ENCODE measurements at regions of chr5 and their contacts with region 1.

Region 1: GRCh38 chr5:62305715-62306322 is at the start of gene KIF2A:
- DNase-seq: peak; percentile 81 to 97 (median 91)
- ATAC-seq: peak; percentile 83
- H3K4me3 ChIP-seq: peak within 1 kb of the TSS; percentile 52 to 66
- H3K4me3 Mint-ChIP-seq: peak within 1 kb of the TSS; percentile 97
- H3K27ac ChIP-seq: peak within 1 kb of the TSS; percentile 69 to 95
- H3K27ac Mint-ChIP-seq: peak within 1 kb of the TSS; percentile 99
- H3K4me1 ChIP-seq: peaks cover 39% of the 10 kb centered on the region
- H3K4me1 Mint-ChIP-seq: peaks cover 52% of the 10 kb centered on the region
- H3K27me3 ChIP-seq: no peaks in the 10 kb centered on the region
- H3K27me3 Mint-ChIP-seq: no peaks in the 10 kb centered on the region
- CTCF ChIP-seq: no peak
- total RNA-seq, gene KIF2A: 93.1 to 98.3 TPM

Region 2: GRCh38 chr5:61331407-61332357 is 974.1 kb before region 1 on chr5 and contains the start of gene ZSWIM6:
- CTCF ChIA-PET with region 1: no interaction called
- POLR2A ChIA-PET with region 1: no interaction called
- intact Hi-C with region 1: loop called in 1 of 2 experiments (anchors 5 kb)
- DNase-seq: peak; percentile 98 to 100 (median 99)
- ATAC-seq: peak; percentile 82
- H3K4me3 ChIP-seq: peak within 1 kb of the TSS; percentile 93 to 94
- H3K4me3 Mint-ChIP-seq: peak within 1 kb of the TSS; percentile 95
- H3K27ac ChIP-seq: peak within 1 kb of the TSS; percentile 84 to 93
- H3K27ac Mint-ChIP-seq: peak within 1 kb of the TSS; percentile 97
- H3K4me1 ChIP-seq: peaks cover 20% of the 10 kb centered on the region
- H3K4me1 Mint-ChIP-seq: peaks cover 51% of the 10 kb centered on the region
- H3K27me3 ChIP-seq: no peaks in the 10 kb centered on the region
- H3K27me3 Mint-ChIP-seq: peaks cover 14% of the 10 kb centered on the region
- CTCF ChIP-seq: no peak
- total RNA-seq, gene ZSWIM6: 3.9 to 4.1 TPM

Region 3: DNA sequence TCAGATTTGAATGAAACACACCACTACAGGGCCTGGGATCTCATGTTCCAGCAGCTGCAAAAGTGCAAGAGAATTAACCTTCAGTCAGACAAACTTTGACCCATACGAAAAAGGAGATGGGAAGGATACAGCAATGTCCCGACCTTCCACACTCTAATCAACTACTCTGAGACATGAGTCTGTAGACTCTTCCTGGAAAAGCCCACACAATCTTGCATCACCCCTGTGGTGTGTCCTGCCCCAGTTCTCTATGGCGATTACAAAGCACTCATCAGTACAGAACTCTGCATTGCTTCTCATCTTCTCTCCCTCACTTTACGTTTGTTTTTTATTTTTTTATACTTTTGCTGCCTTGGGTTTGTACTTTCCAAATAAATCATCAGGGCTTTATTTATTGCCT is 240.8 kb before region 1 on chr5:
- CTCF ChIA-PET with region 1: no interaction called
- POLR2A ChIA-PET with region 1: no interaction called
- intact Hi-C with region 1: no loop called
- DNase-seq: no peak
- ATAC-seq: no peak
- H3K4me3 ChIP-seq: no peak overlapping the region
- H3K4me3 Mint-ChIP-seq: no peak overlapping the region
- H3K27ac ChIP-seq: no peak overlapping the region
- H3K27ac Mint-ChIP-seq: no peak overlapping the region
- H3K4me1 ChIP-seq: no peaks in the 10 kb centered on the region
- H3K4me1 Mint-ChIP-seq: no peaks in the 10 kb centered on the region
- H3K27me3 ChIP-seq: no peaks in the 10 kb centered on the region
- H3K27me3 Mint-ChIP-seq: peaks cover 15% of the 10 kb centered on the region
- CTCF ChIP-seq: no peak

Region 4: DNA sequence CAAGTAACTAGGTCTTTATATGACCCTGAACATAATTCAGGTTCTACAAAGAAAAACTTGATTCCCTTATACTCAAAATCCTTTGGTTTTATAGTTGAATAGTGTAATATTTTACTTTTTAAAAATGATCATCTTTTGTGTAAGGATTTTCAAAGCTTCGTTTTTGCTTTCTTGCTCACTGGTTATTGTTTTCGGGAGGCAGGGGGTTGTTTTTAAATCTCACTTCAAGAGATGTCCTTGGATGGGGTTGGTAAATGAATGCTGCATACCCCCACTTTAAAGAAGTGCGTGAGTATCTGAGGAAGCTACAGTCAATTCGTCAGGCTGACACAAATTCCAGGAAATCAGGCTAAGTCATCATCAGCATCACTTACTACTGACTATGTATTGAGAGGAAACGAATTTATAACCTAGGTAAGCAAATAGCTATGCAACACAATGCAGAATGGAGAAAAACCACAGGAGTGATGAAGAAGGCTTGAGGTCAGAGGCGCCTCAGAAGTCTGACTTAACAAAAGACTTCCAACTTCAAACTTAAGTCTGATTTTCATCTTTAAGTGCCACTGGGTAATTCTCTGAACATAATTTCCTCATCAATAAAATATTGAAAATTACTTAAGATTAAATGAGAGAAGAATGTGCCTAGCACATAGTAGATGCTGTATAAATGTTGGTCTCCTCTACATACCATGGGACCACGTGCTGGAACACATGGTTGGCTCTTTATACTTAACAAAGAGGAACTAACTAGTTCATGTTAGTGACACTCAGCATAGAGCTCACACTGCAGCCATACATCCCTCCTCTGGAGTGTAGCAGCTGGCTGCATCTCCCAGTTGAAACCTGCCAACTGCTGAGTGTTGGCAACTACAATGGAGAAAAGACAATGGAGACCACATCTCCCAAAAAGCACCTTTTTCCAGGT is 105.8 kb before region 1 on chr5:
- CTCF ChIA-PET with region 1: no interaction called
- POLR2A ChIA-PET with region 1: no interaction called
- intact Hi-C with region 1: no loop called
- DNase-seq: no peak
- ATAC-seq: no peak
- H3K4me3 ChIP-seq: no peak overlapping the region
- H3K4me3 Mint-ChIP-seq: no peak overlapping the region
- H3K27ac ChIP-seq: no peak overlapping the region
- H3K27ac Mint-ChIP-seq: no peak overlapping the region
- H3K4me1 ChIP-seq: no peaks in the 10 kb centered on the region
- H3K4me1 Mint-ChIP-seq: no peaks in the 10 kb centered on the region
- H3K27me3 ChIP-seq: peaks cover 0 to 2% of the 10 kb centered on the region in 2 experiments
- H3K27me3 Mint-ChIP-seq: peaks cover 27% of the 10 kb centered on the region
- CTCF ChIP-seq: no peak

Region 5: DNA sequence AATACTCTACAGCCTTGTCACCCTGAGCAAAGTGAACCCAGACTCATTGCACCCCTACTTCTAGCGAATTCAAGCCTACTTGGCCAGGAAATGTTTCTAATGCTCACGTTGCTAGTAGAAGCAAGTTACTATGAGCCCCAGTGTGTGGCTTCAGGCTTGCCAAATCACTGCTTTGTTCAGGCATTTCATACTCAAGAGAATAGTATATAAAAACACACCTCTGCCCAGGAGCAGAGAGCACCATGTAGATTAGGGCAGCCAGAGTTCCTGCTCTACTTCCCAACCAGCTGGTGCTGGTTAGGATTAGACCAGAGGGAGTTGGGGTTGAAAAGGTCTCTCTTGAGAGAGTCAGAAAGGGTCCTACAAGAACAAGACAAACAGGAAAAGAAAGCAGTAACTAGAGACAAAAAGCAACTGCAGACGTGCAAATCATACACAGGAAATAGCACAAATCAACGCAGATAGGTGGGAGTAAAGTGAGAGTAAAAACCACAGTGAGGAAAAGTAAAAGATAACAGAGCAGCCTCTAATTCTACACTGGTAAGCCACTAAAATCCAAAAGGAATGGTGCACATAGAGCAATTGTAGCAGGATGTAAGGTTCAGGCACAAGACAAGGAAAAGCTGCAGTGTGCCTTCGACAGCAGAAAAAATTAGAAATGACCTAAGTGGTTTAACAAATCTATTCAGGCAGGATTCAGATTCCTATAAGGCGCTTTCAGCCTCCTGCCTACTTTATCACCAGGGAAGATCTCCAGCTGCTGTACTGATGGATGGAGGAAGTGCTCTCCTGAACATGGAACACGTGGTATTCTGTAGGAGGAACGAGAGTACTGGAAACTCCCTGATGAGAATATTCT is 49.4 kb before region 1 on chr5:
- CTCF ChIA-PET with region 1: interaction called, 3 read pairs
- POLR2A ChIA-PET with region 1: interaction called, 6 read pairs
- intact Hi-C with region 1: loop called in 1 of 2 experiments (anchors 5 kb)
- DNase-seq: peak in 7 of 9 experiments; percentile 2 to 73 (median 30)
- ATAC-seq: peak; percentile 80
- H3K4me3 ChIP-seq: peak overlapping the region; percentile 12 to 25
- H3K4me3 Mint-ChIP-seq: peak overlapping the region; percentile 66
- H3K27ac ChIP-seq: peak overlapping the region; percentile 60 to 83
- H3K27ac Mint-ChIP-seq: peak overlapping the region; percentile 98
- H3K4me1 ChIP-seq: peaks cover 57% of the 10 kb centered on the region
- H3K4me1 Mint-ChIP-seq: peaks cover 79% of the 10 kb centered on the region
- H3K27me3 ChIP-seq: no peaks in the 10 kb centered on the region
- H3K27me3 Mint-ChIP-seq: no peaks in the 10 kb centered on the region
- CTCF ChIP-seq: no peak

Region 6: GRCh38 chr5:62326302-62326701 is 20.5 kb after region 1 on chr5:
- CTCF ChIA-PET with region 1: interaction called, 3 read pairs
- POLR2A ChIA-PET with region 1: interaction called, 4 read pairs
- intact Hi-C with region 1: loop called (anchors 2 kb)
- DNase-seq: no peak
- ATAC-seq: no peak
- H3K4me3 ChIP-seq: no peak overlapping the region
- H3K4me3 Mint-ChIP-seq: peak overlapping the region; percentile 17
- H3K27ac ChIP-seq: no peak overlapping the region
- H3K27ac Mint-ChIP-seq: peak overlapping the region; percentile 79
- H3K4me1 ChIP-seq: peaks cover 53% of the 10 kb centered on the region
- H3K4me1 Mint-ChIP-seq: peaks cover 87% of the 10 kb centered on the region
- H3K27me3 ChIP-seq: no peaks in the 10 kb centered on the region
- H3K27me3 Mint-ChIP-seq: no peaks in the 10 kb centered on the region
- CTCF ChIP-seq: no peak

Region 7: GRCh38 chr5:62354028-62354874 is 48.4 kb after region 1 on chr5:
- CTCF ChIA-PET with region 1: interaction called, 8 read pairs
- POLR2A ChIA-PET with region 1: interaction called, 7 read pairs
- intact Hi-C with region 1: loop called in 1 of 2 experiments (anchors 2 kb)
- DNase-seq: peak in 3 of 9 experiments; percentile 30 to 76 (median 69)
- ATAC-seq: peak; percentile 92
- H3K4me3 ChIP-seq: no peak overlapping the region
- H3K4me3 Mint-ChIP-seq: no peak overlapping the region
- H3K27ac ChIP-seq: no peak overlapping the region
- H3K27ac Mint-ChIP-seq: peak overlapping the region; percentile 55
- H3K4me1 ChIP-seq: peaks cover 13% of the 10 kb centered on the region
- H3K4me1 Mint-ChIP-seq: peaks cover 11% of the 10 kb centered on the region
- H3K27me3 ChIP-seq: no peaks in the 10 kb centered on the region
- H3K27me3 Mint-ChIP-seq: no peaks in the 10 kb centered on the region
- CTCF ChIP-seq: peak; percentile 96

Region 8: DNA sequence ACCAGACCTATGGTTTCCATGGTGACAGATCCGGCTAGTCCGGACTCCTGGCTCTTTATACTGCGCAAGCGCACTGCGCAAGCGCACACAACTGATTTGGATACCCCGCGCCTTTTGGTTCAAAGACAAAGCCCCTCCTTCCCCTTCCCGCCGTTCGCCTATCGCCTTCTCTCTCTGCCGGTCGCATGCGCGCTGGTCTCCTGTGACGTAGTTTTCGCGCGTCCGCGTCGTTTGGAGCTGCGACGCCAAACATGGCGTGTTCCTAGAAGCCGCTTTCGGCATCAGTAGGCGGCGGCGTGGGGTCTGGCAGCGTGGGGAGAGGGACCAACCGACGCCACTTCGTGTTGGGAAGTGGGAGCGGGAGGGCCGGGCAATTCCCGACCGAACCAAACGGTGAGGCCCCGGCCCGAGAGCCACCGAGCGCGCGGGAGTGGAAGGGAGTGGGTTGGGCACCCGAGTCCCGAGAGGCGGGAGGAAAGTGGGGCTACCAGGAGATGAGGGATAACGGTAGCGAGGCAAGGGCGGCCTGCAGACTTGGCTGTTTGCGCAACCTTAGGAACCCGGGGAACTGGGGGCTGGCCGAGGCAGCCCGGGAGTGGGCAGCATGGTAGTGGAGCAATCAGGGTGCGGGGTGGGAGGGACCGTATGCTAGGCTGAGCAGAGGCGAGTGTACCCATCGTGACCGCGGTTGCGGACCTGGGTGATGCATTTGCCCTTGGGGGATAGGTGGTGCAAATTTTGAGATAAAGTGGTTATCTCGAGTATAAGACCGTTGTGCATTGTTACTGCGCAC is 106.9 kb after region 1 on chr5 and contains the start of gene IPO11:
- CTCF ChIA-PET with region 1: no interaction called
- POLR2A ChIA-PET with region 1: no interaction called
- intact Hi-C with region 1: loop called in 1 of 2 experiments (anchors 1 kb)
- DNase-seq: peak; percentile 97 to 100 (median 99)
- ATAC-seq: peak; percentile 96
- H3K4me3 ChIP-seq: peak within 1 kb of the TSS; percentile 78 to 98
- H3K4me3 Mint-ChIP-seq: peak within 1 kb of the TSS; percentile 88
- H3K27ac ChIP-seq: peak within 1 kb of the TSS; percentile 80 to 84
- H3K27ac Mint-ChIP-seq: peak within 1 kb of the TSS; percentile 88
- H3K4me1 ChIP-seq: peaks cover 14% of the 10 kb centered on the region
- H3K4me1 Mint-ChIP-seq: peaks cover 30% of the 10 kb centered on the region
- H3K27me3 ChIP-seq: no peaks in the 10 kb centered on the region
- H3K27me3 Mint-ChIP-seq: no peaks in the 10 kb centered on the region
- CTCF ChIP-seq: no peak
- total RNA-seq, gene IPO11: 17.0 to 17.2 TPM

Measured in CD8-positive, alpha-beta T cell (primary cell).